ENCODE measurements at regions of chr2 and their contacts with region 1.

Region 1: GRCh38 chr2:209423562-209424198 is at the start of gene MAP2:
- DNase-seq: peak; percentile 89
- ATAC-seq: peak; percentile 91
- H3K4me3 Mint-ChIP-seq: peak within 1 kb of the TSS; percentile 87
- H3K27ac Mint-ChIP-seq: no peak within 1 kb of the TSS
- H3K4me1 Mint-ChIP-seq: peaks cover 41% of the 10 kb centered on the region
- H3K27me3 Mint-ChIP-seq: peaks cover 37% of the 10 kb centered on the region
- CTCF ChIP-seq: peak; percentile 68; the same call in 1 of the 2 replicates
- total RNA-seq, gene MAP2: 3.7 to 7.6 TPM (median 3.7 TPM) in 3 replicates

Region 2: GRCh38 chr2:209334198-209335017 is 89.3 kb before region 1 on chr2:
- CTCF ChIA-PET with region 1: interaction called, 40 read pairs
- POLR2A ChIA-PET with region 1: no interaction called
- DNase-seq: peak; percentile 57
- ATAC-seq: peak; percentile 76
- H3K4me3 Mint-ChIP-seq: no peak overlapping the region
- H3K27ac Mint-ChIP-seq: no peak overlapping the region
- H3K4me1 Mint-ChIP-seq: peaks cover 13% of the 10 kb centered on the region
- H3K27me3 Mint-ChIP-seq: peaks cover 9% of the 10 kb centered on the region
- CTCF ChIP-seq: peak; percentile 73

Region 3: GRCh38 chr2:209451209-209451834 is 27.6 kb after region 1 on chr2:
- CTCF ChIA-PET with region 1: interaction called, 28 read pairs
- POLR2A ChIA-PET with region 1: interaction called, 5 read pairs
- DNase-seq: peak; percentile 17
- ATAC-seq: peak; percentile 97
- H3K4me3 Mint-ChIP-seq: no peak overlapping the region
- H3K27ac Mint-ChIP-seq: peak overlapping the region; percentile 80
- H3K4me1 Mint-ChIP-seq: peaks cover 25% of the 10 kb centered on the region
- H3K27me3 Mint-ChIP-seq: peaks cover 10% of the 10 kb centered on the region
- CTCF ChIP-seq: no peak

Region 4: DNA sequence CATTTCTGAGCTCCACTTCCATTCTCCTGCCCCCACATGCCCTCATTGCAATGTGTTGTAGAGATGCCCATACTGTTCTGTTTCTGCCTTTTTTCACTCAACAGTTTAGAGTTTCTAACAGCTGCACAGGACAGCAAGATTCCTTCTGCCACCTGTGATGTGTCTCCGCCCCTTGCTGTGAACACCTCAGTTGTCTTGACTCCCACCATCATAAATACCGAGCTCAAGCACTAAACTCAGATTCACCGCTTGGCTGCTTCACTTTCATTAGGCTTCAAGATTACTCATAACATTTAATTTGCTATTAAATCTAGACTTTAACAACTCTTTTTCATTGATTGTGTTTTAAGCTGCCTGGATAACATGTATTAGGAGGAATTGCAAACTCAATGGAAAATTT is 141.1 kb after region 1 on chr2:
- CTCF ChIA-PET with region 1: interaction called, 12 read pairs
- POLR2A ChIA-PET with region 1: no interaction called
- DNase-seq: no peak
- ATAC-seq: no peak
- H3K4me3 Mint-ChIP-seq: no peak overlapping the region
- H3K27ac Mint-ChIP-seq: no peak overlapping the region
- H3K4me1 Mint-ChIP-seq: no peaks in the 10 kb centered on the region
- H3K27me3 Mint-ChIP-seq: no peaks in the 10 kb centered on the region
- CTCF ChIP-seq: no peak

Region 5: DNA sequence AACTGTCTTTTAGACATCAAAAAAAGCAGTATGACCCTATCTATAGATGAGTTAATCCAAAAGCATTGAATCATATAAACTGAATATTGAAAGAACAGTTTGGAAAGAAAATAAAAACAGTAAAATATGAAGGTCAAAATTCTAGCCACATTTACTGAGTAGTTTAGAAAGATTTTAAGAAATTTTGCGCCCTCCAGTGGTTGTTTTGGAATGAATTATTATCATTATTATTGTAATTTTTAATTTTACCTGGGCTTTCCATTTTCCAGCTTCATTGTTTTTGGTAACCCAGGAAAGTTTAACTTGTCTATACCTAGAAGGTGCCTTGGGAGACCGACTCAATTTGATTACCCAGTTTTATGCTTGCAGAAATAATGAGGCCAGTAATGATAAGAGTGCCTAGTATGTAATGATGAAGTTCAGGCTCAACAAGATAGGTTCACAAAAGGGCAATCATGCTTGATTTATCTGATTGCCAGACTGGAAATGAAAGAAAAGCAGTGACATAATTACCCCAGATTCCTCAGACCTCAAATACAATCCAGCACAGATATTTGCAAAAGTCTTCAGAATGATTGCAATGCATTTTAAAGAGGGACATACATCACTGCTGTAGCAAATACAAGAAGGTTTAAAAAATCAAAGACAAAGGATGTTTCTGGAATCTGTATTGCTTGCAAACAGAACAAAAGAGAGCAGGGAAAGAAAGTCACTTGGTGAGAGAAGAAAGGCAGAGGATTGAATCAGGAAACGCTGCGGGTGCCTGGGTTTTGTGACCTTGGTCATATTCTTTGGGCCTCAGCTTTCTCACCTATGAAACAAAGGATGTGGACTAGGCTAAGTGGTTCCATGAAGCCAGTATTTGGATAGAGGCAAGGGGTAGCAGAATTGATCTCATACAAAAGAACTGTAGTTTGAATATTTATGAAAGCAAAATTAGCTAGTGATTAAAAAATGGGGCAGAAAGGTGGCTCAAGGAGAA is 154.0 kb after region 1 on chr2:
- CTCF ChIA-PET with region 1: interaction called, 11 read pairs
- POLR2A ChIA-PET with region 1: no interaction called
- DNase-seq: no peak
- ATAC-seq: peak; percentile 53
- H3K4me3 Mint-ChIP-seq: no peak overlapping the region
- H3K27ac Mint-ChIP-seq: peak overlapping the region; percentile 69
- H3K4me1 Mint-ChIP-seq: peaks cover 32% of the 10 kb centered on the region
- H3K27me3 Mint-ChIP-seq: no peaks in the 10 kb centered on the region
- CTCF ChIP-seq: peak; percentile 19; the same call in 1 of the 2 replicates